Activated CD4-positive, alpha-beta T cell treated with anti-CD3 and anti-CD28 coated beads, Interleukin-2, amount 10 ng/mL, durations not matched to agents 24 days and 14 days (primary cell): ENCODE measurements at regions of chr9 and their contacts with region 1.

Region 1: DNA sequence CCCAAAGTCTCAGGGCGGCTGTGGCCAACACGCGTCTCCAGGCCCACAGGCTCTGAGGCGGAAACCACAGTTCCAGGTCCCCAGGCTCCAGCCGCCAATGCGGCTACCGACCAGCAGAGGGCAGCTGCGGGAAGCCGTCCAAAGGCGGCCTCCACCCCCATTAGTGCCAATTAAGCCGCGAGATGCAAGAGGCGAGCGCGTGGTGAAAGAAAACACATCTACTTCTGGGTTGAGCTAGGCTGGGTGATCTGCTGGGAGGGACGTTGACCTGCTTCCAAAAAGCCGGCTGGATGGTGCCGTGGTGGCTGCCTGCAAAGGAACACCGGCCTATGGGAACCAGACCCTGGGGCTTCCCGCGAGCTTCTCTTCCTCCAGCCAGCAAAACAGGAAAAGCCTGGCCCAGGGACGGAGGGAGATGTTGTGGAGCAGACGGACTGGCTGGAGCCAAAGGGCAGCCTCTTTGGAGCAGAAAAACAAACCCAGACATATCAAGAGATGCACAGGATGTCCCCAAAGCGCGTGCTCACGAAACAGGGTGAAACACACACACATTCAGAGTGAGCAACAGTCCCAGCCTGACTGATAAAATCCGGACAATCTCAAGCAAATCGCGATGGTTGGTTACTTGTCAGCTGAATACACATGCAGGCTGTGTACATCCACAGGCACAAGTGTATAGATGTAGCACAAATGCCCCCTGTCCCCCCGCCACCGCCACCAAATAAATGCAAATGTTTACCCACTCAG is 187.1 kb upstream of the BRINP1 start:
- DNase-seq: peak; percentile 88
- H3K4me3 Mint-ChIP-seq: peak overlapping the region; percentile 48
- H3K27ac Mint-ChIP-seq: no peak overlapping the region
- H3K4me1 Mint-ChIP-seq: peaks cover 6% of the 10 kb centered on the region
- H3K27me3 Mint-ChIP-seq: peaks cover 2% of the 10 kb centered on the region

Region 2: GRCh38 chr9:120477521-120478001 is 921.3 kb after region 1 on chr9:
- intact Hi-C with region 1: loop called (anchors 5 kb)
- DNase-seq: peak; percentile 83
- H3K4me3 Mint-ChIP-seq: no peak overlapping the region
- H3K27ac Mint-ChIP-seq: peak overlapping the region; percentile 29
- H3K4me1 Mint-ChIP-seq: peaks cover 5% of the 10 kb centered on the region
- H3K27me3 Mint-ChIP-seq: no peaks in the 10 kb centered on the region

Region 3: DNA sequence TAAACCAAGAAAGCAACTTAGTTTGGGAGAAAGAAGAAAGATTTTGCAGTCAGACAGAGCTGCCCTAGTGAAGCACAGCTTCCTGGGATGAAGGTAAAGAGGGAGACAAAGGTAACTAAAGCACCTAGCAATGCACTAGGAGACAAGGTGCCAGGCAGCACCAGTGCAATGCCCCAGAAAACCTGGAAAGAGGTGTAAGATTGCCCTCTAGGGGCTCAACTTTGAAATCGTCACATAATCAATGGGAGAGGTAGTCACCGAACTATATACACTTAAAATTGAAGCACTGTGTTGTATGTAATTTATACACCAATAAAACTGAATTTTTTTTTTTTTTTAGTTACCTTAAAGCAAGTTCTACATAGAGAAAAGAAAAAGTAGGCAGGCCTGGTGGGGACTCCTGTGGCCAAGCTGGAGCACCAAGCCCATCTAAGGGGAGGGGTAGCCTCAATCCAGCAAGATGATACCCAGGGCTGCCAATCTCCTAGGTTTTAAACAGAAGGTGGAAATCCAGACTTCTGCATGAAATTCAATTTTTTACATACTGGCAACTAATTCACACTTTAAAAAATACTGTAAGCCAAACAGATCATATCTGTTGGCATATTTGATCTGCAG is 975.5 kb after region 1 on chr9:
- intact Hi-C with region 1: loop called (anchors 10 kb)
- DNase-seq: peak; percentile 70
- H3K4me3 Mint-ChIP-seq: no peak overlapping the region
- H3K27ac Mint-ChIP-seq: no peak overlapping the region
- H3K4me1 Mint-ChIP-seq: peaks cover 7% of the 10 kb centered on the region
- H3K27me3 Mint-ChIP-seq: no peaks in the 10 kb centered on the region